ENCODE measurements at regions of chr14 and their contacts with region 1.

Region 1: GRCh38 chr14:101235335-101236103 is 325.8 kb upstream of the DIO3 start:
- DNase-seq: peak; percentile 61
- H3K4me3 Mint-ChIP-seq: no peak overlapping the region
- H3K27ac Mint-ChIP-seq: no peak overlapping the region
- H3K4me1 Mint-ChIP-seq: no peaks in the 10 kb centered on the region
- H3K27me3 Mint-ChIP-seq: no peaks in the 10 kb centered on the region
- CTCF ChIP-seq: peak; percentile 69

Region 2: GRCh38 chr14:100850841-100851585 is 384.5 kb before region 1 on chr14:
- CTCF ChIA-PET with region 1: interaction called, 15 read pairs
- POLR2A ChIA-PET with region 1: no interaction called
- intact Hi-C with region 1: loop called (anchors 1 kb)
- DNase-seq: peak; percentile 76
- H3K4me3 Mint-ChIP-seq: no peak overlapping the region
- H3K27ac Mint-ChIP-seq: no peak overlapping the region
- H3K4me1 Mint-ChIP-seq: no peaks in the 10 kb centered on the region
- H3K27me3 Mint-ChIP-seq: no peaks in the 10 kb centered on the region
- CTCF ChIP-seq: peak; percentile 86

Region 3: GRCh38 chr14:100906420-100906819 is 329.1 kb before region 1 on chr14:
- CTCF ChIA-PET with region 1: interaction called, 6 read pairs
- POLR2A ChIA-PET with region 1: no interaction called
- intact Hi-C with region 1: loop called (anchors 2 kb)
- DNase-seq: no peak
- H3K4me3 Mint-ChIP-seq: no peak overlapping the region
- H3K27ac Mint-ChIP-seq: no peak overlapping the region
- H3K4me1 Mint-ChIP-seq: peaks cover 5% of the 10 kb centered on the region
- H3K27me3 Mint-ChIP-seq: peaks cover 60% of the 10 kb centered on the region
- CTCF ChIP-seq: peak; percentile 39

Region 4: GRCh38 chr14:101223127-101223526 is 12.4 kb before region 1 on chr14:
- CTCF ChIA-PET with region 1: interaction called, 12 read pairs
- POLR2A ChIA-PET with region 1: no interaction called
- intact Hi-C with region 1: no loop called
- DNase-seq: no peak
- H3K4me3 Mint-ChIP-seq: no peak overlapping the region
- H3K27ac Mint-ChIP-seq: no peak overlapping the region
- H3K4me1 Mint-ChIP-seq: no peaks in the 10 kb centered on the region
- H3K27me3 Mint-ChIP-seq: peaks cover 42% of the 10 kb centered on the region
- CTCF ChIP-seq: no peak

Region 5: GRCh38 chr14:101559624-101560533 is 324.4 kb after region 1 on chr14:
- CTCF ChIA-PET with region 1: no interaction called
- POLR2A ChIA-PET with region 1: no interaction called
- intact Hi-C with region 1: loop called (anchors 5 kb)
- DNase-seq: no peak
- H3K4me3 Mint-ChIP-seq: no peak overlapping the region
- H3K27ac Mint-ChIP-seq: no peak overlapping the region
- H3K4me1 Mint-ChIP-seq: peaks cover 13% of the 10 kb centered on the region
- H3K27me3 Mint-ChIP-seq: peaks cover 27% of the 10 kb centered on the region
- CTCF ChIP-seq: no peak

Region 6: GRCh38 chr14:101628471-101628966 is 393.0 kb after region 1 on chr14:
- CTCF ChIA-PET with region 1: interaction called, 3 read pairs
- POLR2A ChIA-PET with region 1: no interaction called
- intact Hi-C with region 1: loop called (anchors 2 kb)
- DNase-seq: peak; percentile 68
- H3K4me3 Mint-ChIP-seq: no peak overlapping the region
- H3K27ac Mint-ChIP-seq: no peak overlapping the region
- H3K4me1 Mint-ChIP-seq: no peaks in the 10 kb centered on the region
- H3K27me3 Mint-ChIP-seq: peaks cover 39% of the 10 kb centered on the region
- CTCF ChIP-seq: peak; percentile 94

Measured in MCF 10A (cell line).